Prostate gland (tissue), 2 donors: ENCODE measurements at regions of chr9 and their contacts with region 1.

Region 1: DNA sequence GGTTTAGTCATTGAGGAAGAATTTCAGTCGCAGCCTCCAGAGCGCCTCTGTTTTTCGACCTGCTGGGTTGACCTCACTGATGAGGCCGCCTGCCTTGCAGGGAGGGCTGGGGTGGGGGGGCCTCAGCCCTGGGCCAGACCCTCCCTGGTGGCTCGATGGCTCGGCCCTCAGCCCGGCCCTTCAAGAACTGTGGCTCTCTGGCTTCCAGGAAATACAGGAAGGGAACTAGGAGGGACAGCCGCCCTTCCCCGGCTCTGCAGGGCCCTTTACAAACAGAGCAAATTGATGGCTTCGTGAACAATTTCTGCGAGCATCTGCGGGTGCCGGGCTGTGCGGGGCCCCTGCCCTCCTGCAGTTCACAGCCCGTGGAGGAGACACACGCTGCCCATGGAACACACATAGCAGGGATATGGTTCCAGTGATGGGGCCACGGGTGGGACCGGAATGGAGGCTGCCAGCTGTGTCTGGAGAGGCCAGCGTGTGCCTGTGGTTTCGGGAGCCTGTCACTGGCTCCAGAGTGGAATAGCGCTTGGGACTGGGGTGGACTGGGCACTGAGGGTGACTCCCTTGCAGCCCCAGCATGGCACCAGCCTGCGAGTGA is 39.6 kb downstream of the COL5A1 start:
- DNase-seq: no peak
- H3K4me3 ChIP-seq: no peak overlapping the region
- H3K27ac ChIP-seq: no peak overlapping the region
- H3K4me1 ChIP-seq: no peaks in the 10 kb centered on the region
- H3K27me3 ChIP-seq: no peaks in the 10 kb centered on the region
- CTCF ChIP-seq: no peak
- POLR2A ChIP-seq: no peak

Region 2: DNA sequence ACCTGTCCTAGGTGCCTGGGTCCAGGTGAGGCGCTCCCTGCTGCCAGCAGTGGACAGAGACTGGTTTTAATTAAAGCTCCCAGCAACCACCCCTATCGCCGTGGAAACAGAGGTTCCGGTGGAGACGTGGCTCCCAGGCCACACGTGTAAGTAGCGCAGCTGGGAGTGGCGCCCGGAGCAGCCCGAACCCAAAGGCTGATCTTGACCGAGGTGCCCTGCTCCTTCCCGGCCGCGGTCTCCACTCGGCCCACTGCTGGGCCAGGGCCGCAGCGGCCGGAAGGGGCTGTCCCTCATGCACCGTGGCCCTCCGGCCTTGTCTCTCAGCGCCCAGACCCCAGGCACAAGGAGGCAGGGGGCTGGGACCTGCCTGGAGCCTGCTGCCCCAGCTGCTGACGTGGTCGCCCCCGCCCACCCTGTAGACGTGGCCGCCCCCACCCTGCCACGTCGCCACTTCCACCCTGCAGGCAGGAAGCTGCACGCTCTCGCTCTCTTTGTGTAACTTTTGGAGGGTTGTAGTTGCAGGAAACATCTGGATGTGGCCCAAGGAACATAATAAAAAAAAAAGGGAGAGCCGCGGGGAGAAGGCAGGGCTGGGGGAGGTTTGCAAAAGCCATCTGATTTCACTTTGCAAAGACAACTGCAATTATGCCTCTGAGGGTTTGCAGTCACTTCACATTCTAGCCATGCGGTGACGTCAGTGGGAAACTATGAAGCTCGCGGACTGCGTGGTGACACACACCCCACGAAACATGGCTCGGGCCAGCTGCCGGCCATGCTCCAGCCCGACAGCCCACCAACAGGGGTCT is 225.0 kb before region 1 on chr9:
- intact Hi-C with region 1: loop called (anchors 5 kb)
- DNase-seq: peak; percentile 58
- H3K4me3 ChIP-seq: peak overlapping the region; percentile 3 to 25
- H3K27ac ChIP-seq: peak overlapping the region; percentile 78 to 80
- H3K4me1 ChIP-seq: peaks cover 11% of the 10 kb centered on the region
- H3K27me3 ChIP-seq: no peaks in the 10 kb centered on the region
- CTCF ChIP-seq: peak in 2 of 4 experiments; percentile 1 to 6
- POLR2A ChIP-seq: peak; percentile 57